ENCODE measurements at regions of chr6 and their contacts with region 1.

Region 1: DNA sequence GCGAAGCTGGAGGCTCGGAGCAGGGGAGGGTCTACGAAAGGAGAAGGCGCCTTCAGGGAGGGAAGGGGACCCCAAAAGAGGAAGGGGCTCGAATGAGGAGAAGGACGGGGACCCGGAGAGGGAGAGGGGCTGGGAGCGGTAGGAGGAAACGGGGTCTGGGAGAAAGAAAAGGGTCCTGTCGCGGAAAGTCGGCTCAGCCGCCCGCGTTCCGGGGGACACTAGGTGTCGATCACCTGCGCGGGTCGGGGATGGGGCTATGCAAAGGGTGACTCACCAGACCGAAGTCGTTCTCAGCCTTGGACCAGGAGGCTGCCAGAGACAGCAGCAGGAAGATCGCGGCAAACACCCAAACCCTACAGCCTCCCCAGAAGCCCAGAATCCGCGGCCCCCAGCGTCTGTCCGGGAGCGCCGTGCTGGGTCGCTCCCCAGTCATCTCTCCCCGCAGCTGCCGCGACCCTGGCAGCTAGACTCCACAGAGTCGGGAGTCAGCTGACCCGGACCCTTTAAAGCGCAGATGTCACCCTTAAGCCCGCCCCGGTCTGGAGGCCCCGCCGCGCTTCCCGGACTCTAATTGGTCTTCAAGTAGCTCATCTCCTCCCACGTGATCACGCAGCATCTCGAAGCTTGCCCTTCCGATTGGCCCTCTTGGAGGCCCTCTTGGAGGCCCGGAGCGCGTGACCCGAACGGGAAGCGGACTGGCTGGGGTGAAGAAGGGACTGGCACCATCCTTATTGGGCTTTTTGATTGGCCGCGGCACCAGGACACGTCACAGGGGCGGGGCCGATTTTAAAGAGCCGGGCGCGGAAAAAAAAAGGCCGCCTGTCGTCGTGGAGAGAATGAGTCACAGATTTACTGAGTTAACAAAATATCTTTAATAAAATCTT is at the start of gene NEU1:
- DNase-seq: peak; percentile 100
- ATAC-seq: peak; percentile 98
- H3K4me3 ChIP-seq: peak within 1 kb of the TSS; percentile 62
- H3K27ac ChIP-seq: peak within 1 kb of the TSS; percentile 73
- H3K4me1 ChIP-seq: peaks cover 13 to 43% of the 10 kb centered on the region in 2 experiments; a peak in 4 of 5 replicates
- H3K27me3 ChIP-seq: no peaks in the 10 kb centered on the region
- CTCF ChIP-seq: peak in 1 of 3 experiments; percentile 3; a peak in 1 of 6 replicates
- EP300 ChIP-seq: peak; percentile 38
- POLR2A ChIP-seq: peak; percentile 98
- RAD21 ChIP-seq: peak; percentile 19 to 32; a peak in 1 of 4 replicates
- polyA plus RNA-seq, gene NEU1: 14.8 to 20.6 TPM

Region 2: GRCh38 chr6:31660381-31661261 is 202.0 kb before region 1 on chr6 and contains the start of gene C6orf47:
- CTCF ChIA-PET with region 1: no interaction called
- POLR2A ChIA-PET with region 1: interaction called, 30 read pairs
- in situ Hi-C with region 1: loop called (anchors 5 kb)
- intact Hi-C with region 1: no loop called
- DNase-seq: peak; percentile 93 to 99 (median 96)
- ATAC-seq: peak; percentile 82
- H3K4me3 ChIP-seq: peak within 1 kb of the TSS; percentile 52
- H3K27ac ChIP-seq: peak within 1 kb of the TSS; percentile 80
- H3K4me1 ChIP-seq: peaks cover 47 to 65% of the 10 kb centered on the region in 2 experiments
- H3K27me3 ChIP-seq: no peaks in the 10 kb centered on the region
- CTCF ChIP-seq: no peak
- EP300 ChIP-seq: 0 out of 2 replicates have a peak, but pooled peaks have one; percentile 62
- POLR2A ChIP-seq: peak; percentile 93
- RAD21 ChIP-seq: peak; percentile 5 to 28; a peak in 3 of 4 replicates
- polyA plus RNA-seq, gene C6orf47: 0.14 to 0.27 TPM

Region 3: DNA sequence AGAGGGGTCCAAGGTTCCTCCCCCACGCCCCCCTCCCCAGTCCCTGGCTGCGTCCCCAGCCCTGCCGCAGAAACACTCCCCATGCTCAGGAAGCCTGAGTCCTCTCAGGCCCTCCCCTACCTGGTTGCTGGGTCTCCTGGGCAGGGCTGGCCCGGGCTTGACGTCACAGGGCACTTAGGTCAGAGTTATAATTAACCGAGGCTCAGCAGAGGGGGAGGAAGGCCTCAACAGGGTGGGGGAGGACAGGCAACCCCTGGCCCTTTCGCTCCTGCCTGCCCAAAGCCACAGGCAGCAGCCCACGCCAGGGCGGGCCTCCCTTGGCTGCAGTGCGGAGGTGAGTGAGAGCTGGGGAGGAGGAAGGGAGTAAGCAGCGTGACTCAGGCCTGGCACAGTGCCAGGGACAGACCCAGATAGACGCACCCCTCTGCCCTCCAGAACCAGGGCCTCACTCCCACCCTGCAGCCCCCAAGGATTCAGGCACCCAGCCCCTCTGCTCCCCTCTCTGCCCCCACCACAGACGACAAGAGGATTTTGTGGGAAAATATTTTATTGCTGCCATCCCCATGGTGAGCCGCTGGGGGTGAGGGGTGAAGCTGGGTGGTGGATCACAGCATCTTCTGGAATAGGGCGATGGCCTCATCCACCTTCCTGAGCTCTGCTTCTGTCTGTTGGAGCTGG is 85.5 kb before region 1 on chr6 and contains the start of gene VWA7:
- CTCF ChIA-PET with region 1: interaction called, 4 read pairs
- POLR2A ChIA-PET with region 1: interaction called, 4 read pairs
- in situ Hi-C with region 1: no loop called
- intact Hi-C with region 1: loop called (anchors 1 kb)
- DNase-seq: peak; percentile 98 to 99 (median 99)
- ATAC-seq: peak; percentile 91
- H3K4me3 ChIP-seq: peak within 1 kb of the TSS; percentile 10; the same call in 1 of the 2 replicates
- H3K27ac ChIP-seq: peak within 1 kb of the TSS; percentile 87
- H3K4me1 ChIP-seq: peaks cover 43 to 85% of the 10 kb centered on the region in 2 experiments
- H3K27me3 ChIP-seq: no peaks in the 10 kb centered on the region
- CTCF ChIP-seq: peak; percentile 14 to 44 (median 24); a peak in 2 of 6 replicates
- EP300 ChIP-seq: peak; percentile 88
- POLR2A ChIP-seq: peak; percentile 84; the same call in 1 of the 2 replicates
- RAD21 ChIP-seq: peak; percentile 46 to 80
- polyA plus RNA-seq, gene VWA7: 0.18 to 0.32 TPM

Region 4: DNA sequence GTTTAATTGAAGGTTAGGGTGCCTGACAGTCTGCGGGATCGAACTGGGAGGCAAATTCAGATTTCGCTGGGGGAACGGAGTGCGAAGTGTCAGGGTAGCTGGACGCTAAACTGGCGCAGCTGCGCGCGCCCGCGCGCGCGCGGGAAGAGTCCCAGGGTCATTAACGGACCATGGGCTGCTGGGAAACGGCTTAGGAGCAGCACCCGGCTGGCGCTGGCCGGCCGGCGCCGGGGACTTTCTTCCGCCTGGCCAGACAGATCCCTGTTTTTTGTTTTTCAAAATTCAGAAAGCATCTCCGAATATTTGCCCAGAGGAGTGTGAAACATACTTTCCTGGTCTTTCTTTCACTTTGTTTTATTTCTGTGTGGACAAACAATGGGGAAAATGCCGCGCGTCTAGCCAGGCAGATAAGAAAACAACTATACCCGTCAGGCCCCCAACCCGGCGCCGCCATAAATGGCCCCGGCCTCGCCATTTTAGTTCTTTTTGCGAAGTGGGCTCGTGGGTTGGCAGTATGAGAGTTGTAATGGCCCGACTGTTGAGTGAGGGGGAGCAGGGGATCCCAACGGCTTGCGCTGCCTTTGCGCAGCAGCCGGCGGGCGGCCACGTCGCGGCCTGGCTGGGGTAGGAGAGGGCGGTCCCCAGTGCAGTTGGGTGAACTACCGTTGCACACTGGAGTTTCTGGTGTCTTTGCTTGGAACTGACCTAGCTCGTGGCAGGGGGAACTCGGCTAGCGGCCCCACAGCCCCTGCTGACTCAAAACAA is 28.0 kb before region 1 on chr6:
- CTCF ChIA-PET with region 1: interaction called, 3 read pairs
- POLR2A ChIA-PET with region 1: interaction called, 82 read pairs
- in situ Hi-C with region 1: no loop called
- intact Hi-C with region 1: loop called (anchors 1 kb)
- DNase-seq: peak; percentile 88 to 99 (median 94)
- ATAC-seq: peak; percentile 79
- H3K4me3 ChIP-seq: peak overlapping the region; percentile 85
- H3K27ac ChIP-seq: peak overlapping the region; percentile 88
- H3K4me1 ChIP-seq: peaks cover 41 to 55% of the 10 kb centered on the region in 2 experiments
- H3K27me3 ChIP-seq: no peaks in the 10 kb centered on the region
- CTCF ChIP-seq: peak in 1 of 3 experiments; percentile 20; a peak in 1 of 6 replicates
- EP300 ChIP-seq: peak; percentile 83
- POLR2A ChIP-seq: peak; percentile 100
- RAD21 ChIP-seq: peak; percentile 1 to 33; a peak in 2 of 4 replicates

Region 5: GRCh38 chr6:31851485-31851832 is 11.1 kb before region 1 on chr6:
- CTCF ChIA-PET with region 1: no interaction called
- POLR2A ChIA-PET with region 1: interaction called, 91 read pairs
- in situ Hi-C with region 1: no loop called
- intact Hi-C with region 1: no loop called
- DNase-seq: no peak
- ATAC-seq: no peak
- H3K4me3 ChIP-seq: no peak overlapping the region
- H3K27ac ChIP-seq: no peak overlapping the region
- H3K4me1 ChIP-seq: peaks cover 0 to 8% of the 10 kb centered on the region in 2 experiments; a peak in 2 of 5 replicates
- H3K27me3 ChIP-seq: no peaks in the 10 kb centered on the region
- CTCF ChIP-seq: no peak
- EP300 ChIP-seq: no peak
- POLR2A ChIP-seq: no peak
- RAD21 ChIP-seq: no peak

Region 6: DNA sequence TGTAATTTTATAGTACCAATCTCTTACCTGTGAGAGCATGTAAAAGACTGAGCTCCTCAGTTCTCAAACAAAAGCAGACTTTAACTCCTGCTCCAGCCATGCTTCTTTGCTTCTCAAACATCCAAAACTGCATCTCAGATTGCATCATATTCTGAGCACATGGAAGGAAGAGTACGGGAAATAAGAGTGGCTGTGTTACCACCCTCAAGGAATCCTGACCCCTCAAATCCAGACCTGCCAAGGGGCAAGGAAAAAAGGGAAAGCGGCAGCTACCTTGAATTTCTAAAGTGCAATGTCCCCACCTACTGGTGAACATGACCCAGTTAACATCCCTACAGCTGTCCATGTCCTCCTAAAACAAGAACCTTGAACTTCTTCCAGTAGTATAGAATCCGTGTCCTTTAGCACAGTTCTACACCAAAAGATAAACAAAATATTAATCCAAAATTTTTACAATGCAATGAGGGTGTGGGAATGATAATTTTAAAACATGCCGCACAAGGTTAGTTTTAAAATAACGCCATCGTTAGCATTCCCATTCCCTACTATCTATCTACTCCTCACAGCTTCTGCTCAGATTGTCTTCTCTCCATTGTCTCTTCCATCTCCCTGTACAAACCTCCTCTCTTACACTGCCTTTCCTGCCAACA is 837.9 kb after region 1 on chr6:
- CTCF ChIA-PET with region 1: no interaction called
- POLR2A ChIA-PET with region 1: no interaction called
- in situ Hi-C with region 1: no loop called
- intact Hi-C with region 1: no loop called
- DNase-seq: peak; percentile 19 to 72 (median 40)
- ATAC-seq: peak; percentile 82
- H3K4me3 ChIP-seq: no peak overlapping the region
- H3K27ac ChIP-seq: no peak overlapping the region
- H3K4me1 ChIP-seq: no peaks in the 10 kb centered on the region
- H3K27me3 ChIP-seq: peaks cover 0 to 9% of the 10 kb centered on the region in 2 experiments; a peak in 2 of 5 replicates
- CTCF ChIP-seq: peak; percentile 66 to 81 (median 78)
- EP300 ChIP-seq: no peak
- POLR2A ChIP-seq: no peak
- RAD21 ChIP-seq: peak; percentile 80 to 84

Measured in K562 (cell line).